Thyroid gland (tissue), 4 donors: ENCODE measurements at regions of chr7 and their contacts with region 1.

Region 1: DNA sequence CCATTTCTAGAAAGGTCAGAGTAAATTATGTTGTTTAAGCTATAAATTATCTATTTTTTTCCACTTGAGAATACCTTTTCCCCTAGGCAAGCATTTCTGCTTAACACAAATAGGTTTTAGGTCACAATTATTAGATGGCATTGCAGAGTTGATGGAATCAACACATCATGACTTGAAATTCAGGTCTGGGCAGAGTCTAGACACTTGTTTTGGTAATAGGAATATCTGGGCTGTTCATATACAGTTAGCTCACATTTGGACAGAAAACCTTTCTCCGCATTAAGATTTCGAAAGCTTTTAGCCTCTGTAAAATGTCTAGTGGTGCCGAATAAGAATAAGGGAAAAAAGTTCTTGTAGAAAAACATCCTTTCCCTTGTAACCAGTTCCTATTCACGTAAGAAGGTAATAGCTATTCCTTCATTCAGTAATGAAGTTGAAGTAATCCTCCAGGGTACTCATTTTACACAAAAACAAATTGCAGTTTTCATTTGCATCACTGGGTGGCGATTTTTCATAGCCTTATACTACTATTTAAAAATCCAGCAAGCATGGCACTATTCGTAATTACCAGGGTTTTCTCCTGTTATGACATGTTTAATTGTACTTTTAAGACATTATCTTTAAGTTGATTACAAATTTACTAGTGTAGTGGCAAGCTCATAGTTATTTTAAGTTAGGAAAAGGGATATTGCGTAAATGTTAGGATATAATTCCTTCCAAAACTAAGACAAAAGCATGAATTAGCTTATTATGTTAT is 37.0 kb downstream of the RPA3 start:
- DNase-seq: peak; percentile 33 to 47
- H3K4me3 ChIP-seq: no peak overlapping the region
- H3K27ac ChIP-seq: peak overlapping the region; percentile 17 to 85 (median 53)
- H3K4me1 ChIP-seq: peaks cover 20 to 27% of the 10 kb centered on the region in 2 donors
- H3K27me3 ChIP-seq: no peaks in the 10 kb centered on the region
- CTCF ChIP-seq: peak; percentile 30 to 83 (median 54)
- POLR2A ChIP-seq: no peak

Region 2: DNA sequence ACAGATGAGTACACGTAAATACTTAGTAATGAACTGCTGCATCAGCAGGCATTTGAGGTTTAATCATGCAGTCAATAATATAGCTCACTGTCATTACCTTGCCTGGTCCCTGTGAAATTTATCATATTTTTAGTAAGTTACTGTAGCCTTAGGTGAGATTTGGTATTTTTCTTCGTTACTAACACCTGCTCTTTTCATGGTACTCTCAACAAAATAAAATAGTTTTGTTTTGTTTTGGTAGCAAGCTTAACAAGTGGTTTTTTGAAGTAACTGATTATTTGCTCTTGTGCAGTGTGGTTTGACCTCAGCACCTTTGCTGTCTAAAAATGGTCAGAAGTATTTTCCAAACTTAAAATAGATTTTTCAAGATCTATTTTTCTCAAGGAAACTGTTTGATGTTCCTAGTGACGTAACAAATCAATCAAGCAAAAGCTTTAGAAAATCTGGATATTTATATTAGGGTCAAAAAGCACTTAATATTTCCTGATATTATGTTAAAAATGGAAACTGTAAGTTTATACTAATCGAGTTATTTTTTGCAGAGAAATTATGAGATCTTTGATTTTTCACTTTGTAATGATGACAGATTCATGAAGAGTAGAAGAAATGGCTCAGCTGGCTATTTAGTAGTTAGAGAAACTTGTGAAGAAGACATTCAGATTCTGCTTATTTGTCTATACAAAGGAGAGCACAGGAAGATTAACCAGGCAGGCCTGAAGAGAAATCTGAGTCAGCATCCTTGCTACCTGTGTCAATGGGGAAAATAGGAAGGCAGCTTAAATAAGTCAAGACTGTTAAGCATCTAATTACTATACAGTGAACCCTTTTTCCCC is 58.1 kb after region 1 on chr7:
- intact Hi-C with region 1: loop called (anchors 10 kb)
- DNase-seq: no peak
- H3K4me3 ChIP-seq: no peak overlapping the region
- H3K27ac ChIP-seq: peak overlapping the region; percentile 57 to 63 (median 59)
- H3K4me1 ChIP-seq: peaks cover 15 to 21% of the 10 kb centered on the region in 2 donors
- H3K27me3 ChIP-seq: no peaks in the 10 kb centered on the region
- CTCF ChIP-seq: no peak
- POLR2A ChIP-seq: no peak